ENCODE measurements at regions of chr9 and their contacts with region 1.

Region 1: GRCh38 chr9:94993064-94993833 is 266.8 kb downstream of the AOPEP start:
- DNase-seq: no peak
- ATAC-seq: no peak
- H3K4me3 ChIP-seq: no peak overlapping the region
- H3K27ac ChIP-seq: peak overlapping the region in 4 of 12 donors; percentile 17 to 72 (median 28)
- H3K4me1 ChIP-seq: peaks cover 0 to 29% (median 21%) of the 10 kb centered on the region in 12 donors
- H3K27me3 ChIP-seq: no peaks in the 10 kb centered on the region
- CTCF ChIP-seq: no peak
- POLR2A ChIP-seq: no peak

Region 2: GRCh38 chr9:94829380-94830070 is 163.7 kb before region 1 on chr9:
- intact Hi-C with region 1: no loop called
- DNase-seq: no peak
- ATAC-seq: no peak
- H3K4me3 ChIP-seq: no peak overlapping the region
- H3K27ac ChIP-seq: no peak overlapping the region
- H3K4me1 ChIP-seq: peaks cover 0 to 37% (median 16%) of the 10 kb centered on the region in 12 donors
- H3K27me3 ChIP-seq: no peaks in the 10 kb centered on the region
- CTCF ChIP-seq: no peak
- POLR2A ChIP-seq: no peak

Region 3: GRCh38 chr9:94882966-94883641 is 110.1 kb before region 1 on chr9:
- intact Hi-C with region 1: loop called in 1 of 10 experiments (anchors 5 kb)
- DNase-seq: peak in 1 of 5 donors; percentile 42
- ATAC-seq: peak in 1 of 4 donors; percentile 52
- H3K4me3 ChIP-seq: no peak overlapping the region
- H3K27ac ChIP-seq: peak overlapping the region in 11 of 12 donors; percentile 8 to 75 (median 52)
- H3K4me1 ChIP-seq: peaks cover 4 to 58% (median 33%) of the 10 kb centered on the region in 12 donors
- H3K27me3 ChIP-seq: no peaks in the 10 kb centered on the region
- CTCF ChIP-seq: no peak
- POLR2A ChIP-seq: no peak

Region 4: GRCh38 chr9:94908011-94908563 is 85.2 kb before region 1 on chr9:
- intact Hi-C with region 1: no loop called
- DNase-seq: no peak
- ATAC-seq: peak in 3 of 4 donors; percentile 34 to 53 (median 37)
- H3K4me3 ChIP-seq: no peak overlapping the region
- H3K27ac ChIP-seq: peak overlapping the region in 9 of 12 donors; percentile 35 to 78 (median 67)
- H3K4me1 ChIP-seq: peaks cover 0 to 33% (median 19%) of the 10 kb centered on the region in 12 donors
- H3K27me3 ChIP-seq: no peaks in the 10 kb centered on the region
- CTCF ChIP-seq: no peak
- POLR2A ChIP-seq: no peak

Region 5: DNA sequence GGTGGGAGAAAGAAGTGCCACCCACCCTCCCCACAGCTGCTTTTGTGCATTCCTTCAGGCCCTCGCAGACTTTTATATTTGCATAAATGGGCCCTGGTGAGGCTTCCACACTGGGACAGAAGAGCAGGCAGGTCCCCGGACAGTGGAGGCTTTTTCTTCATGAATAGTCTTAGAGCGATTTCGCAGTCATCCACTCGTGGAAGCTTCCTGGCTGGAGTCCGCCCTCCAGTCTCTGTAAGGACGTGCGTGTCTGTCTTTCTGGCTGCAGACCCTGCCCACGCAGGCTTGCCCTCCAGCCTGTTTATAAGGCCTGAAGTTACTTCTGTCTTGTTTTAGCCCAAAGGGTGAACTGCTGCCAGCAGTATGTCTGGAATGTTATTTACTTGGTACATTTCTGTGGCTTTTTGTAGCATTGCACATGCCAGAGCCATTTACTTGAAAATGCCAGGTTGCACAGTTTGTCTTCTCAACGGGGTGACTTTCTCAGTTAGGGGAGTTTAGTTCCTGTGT is 71.1 kb before region 1 on chr9:
- intact Hi-C with region 1: loop called in 1 of 10 experiments (anchors 10 kb)
- DNase-seq: peak in 2 of 5 donors; percentile 44 to 46
- ATAC-seq: peak; percentile 15 to 42 (median 30)
- H3K4me3 ChIP-seq: peak overlapping the region in 1 of 12 donors; percentile 5
- H3K27ac ChIP-seq: peak overlapping the region; percentile 53 to 82 (median 70)
- H3K4me1 ChIP-seq: peaks cover 3 to 49% (median 34%) of the 10 kb centered on the region in 12 donors
- H3K27me3 ChIP-seq: no peaks in the 10 kb centered on the region
- CTCF ChIP-seq: no peak
- POLR2A ChIP-seq: no peak

Region 6: GRCh38 chr9:94952565-94953373 is 40.5 kb before region 1 on chr9:
- intact Hi-C with region 1: loop called in 5 of 10 experiments (anchors 5 kb)
- DNase-seq: peak in 2 of 5 donors; percentile 46 to 65
- ATAC-seq: peak; percentile 23 to 77 (median 56)
- H3K4me3 ChIP-seq: peak overlapping the region in 3 of 12 donors; percentile 1 to 15 (median 2)
- H3K27ac ChIP-seq: peak overlapping the region; percentile 43 to 88 (median 74)
- H3K4me1 ChIP-seq: peaks cover 10 to 56% (median 47%) of the 10 kb centered on the region in 12 donors
- H3K27me3 ChIP-seq: no peaks in the 10 kb centered on the region
- CTCF ChIP-seq: no peak
- POLR2A ChIP-seq: no peak

Measured in heart left ventricle (tissue), 16 donors.